Activated naive CD4-positive, alpha-beta T cell treated with anti-CD3 and anti-CD28 coated beads, Interleukin-2, amount 10 ng/mL, durations not matched to agents 7 days and 5 days (primary cell): ENCODE measurements at regions of chr10 and their contacts with region 1.

Region 1: DNA sequence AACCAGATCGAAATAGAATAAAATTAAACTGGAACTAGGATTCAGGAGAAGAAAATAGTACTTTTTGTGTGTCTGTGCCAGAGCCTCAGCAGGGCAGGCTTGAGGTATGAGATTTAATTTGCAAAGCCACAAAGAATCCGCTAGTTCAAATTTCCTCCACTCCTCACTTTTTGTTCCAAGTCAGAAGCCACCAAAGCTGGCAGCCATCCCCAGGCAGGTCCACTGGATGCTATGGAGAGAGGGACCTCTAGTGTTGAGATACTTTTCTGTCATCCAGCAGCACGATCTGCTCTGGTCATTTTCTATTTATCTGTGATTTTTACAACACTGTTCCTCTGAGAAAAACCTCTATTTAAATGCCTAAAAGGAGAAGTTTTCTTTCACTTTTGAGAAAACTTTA is 147.9 kb upstream of the FRMD4A start:
- DNase-seq: peak; percentile 42
- H3K4me3 Mint-ChIP-seq: no peak overlapping the region
- H3K27ac Mint-ChIP-seq: no peak overlapping the region
- H3K4me1 Mint-ChIP-seq: no peaks in the 10 kb centered on the region
- H3K27me3 Mint-ChIP-seq: peaks cover 60% of the 10 kb centered on the region

Region 2: DNA sequence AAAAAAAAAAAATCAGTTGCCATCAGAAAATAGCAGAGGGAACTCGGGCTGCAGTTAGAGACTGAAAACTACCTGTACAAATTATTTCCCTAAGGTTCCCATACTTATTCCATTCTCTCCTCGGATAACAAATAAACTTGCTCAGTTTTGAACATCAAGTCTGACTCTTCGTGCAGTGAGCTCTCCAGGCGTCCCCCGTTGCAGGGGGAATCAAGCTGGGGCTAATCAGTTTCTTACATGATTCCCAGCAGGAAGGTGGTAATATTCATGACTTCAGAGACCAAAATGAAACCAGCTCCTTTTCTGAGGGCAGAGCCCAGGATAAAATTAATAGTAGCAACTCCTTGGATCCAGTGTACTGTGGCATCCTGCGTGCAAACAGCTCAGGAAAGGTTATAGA is 283.2 kb before region 1 on chr10:
- CTCF ChIA-PET with region 1: interaction called, 51 read pairs
- DNase-seq: no peak
- H3K4me3 Mint-ChIP-seq: no peak overlapping the region
- H3K27ac Mint-ChIP-seq: no peak overlapping the region
- H3K4me1 Mint-ChIP-seq: no peaks in the 10 kb centered on the region
- H3K27me3 Mint-ChIP-seq: peaks cover 48% of the 10 kb centered on the region